AG04450 (cell line): ENCODE measurements at regions of chr2 and their contacts with region 1.

Region 1: GRCh38 chr2:232438951-232439757 is 16.8 kb upstream of the ALPI start:
- DNase-seq: no peak
- H3K4me3 ChIP-seq: no peak overlapping the region
- H3K27ac ChIP-seq: no peak overlapping the region
- H3K27me3 ChIP-seq: peaks cover 10% of the 10 kb centered on the region
- CTCF ChIP-seq: no peak; the same call in 1 of the 2 replicates

Region 2: GRCh38 chr2:231900486-231900942 is 538.6 kb before region 1 on chr2:
- CTCF ChIA-PET with region 1: interaction called, 36 read pairs
- POLR2A ChIA-PET with region 1: no interaction called
- DNase-seq: peak; percentile 11
- H3K4me3 ChIP-seq: no peak overlapping the region
- H3K27ac ChIP-seq: no peak overlapping the region
- H3K27me3 ChIP-seq: peaks cover 20% of the 10 kb centered on the region
- CTCF ChIP-seq: peak; percentile 92

Region 3: GRCh38 chr2:231907787-231908186 is 531.4 kb before region 1 on chr2:
- CTCF ChIA-PET with region 1: interaction called, 36 read pairs
- POLR2A ChIA-PET with region 1: no interaction called
- DNase-seq: no peak
- H3K4me3 ChIP-seq: no peak overlapping the region
- H3K27ac ChIP-seq: no peak overlapping the region
- H3K27me3 ChIP-seq: peaks cover 11% of the 10 kb centered on the region
- CTCF ChIP-seq: no peak

Region 4: DNA sequence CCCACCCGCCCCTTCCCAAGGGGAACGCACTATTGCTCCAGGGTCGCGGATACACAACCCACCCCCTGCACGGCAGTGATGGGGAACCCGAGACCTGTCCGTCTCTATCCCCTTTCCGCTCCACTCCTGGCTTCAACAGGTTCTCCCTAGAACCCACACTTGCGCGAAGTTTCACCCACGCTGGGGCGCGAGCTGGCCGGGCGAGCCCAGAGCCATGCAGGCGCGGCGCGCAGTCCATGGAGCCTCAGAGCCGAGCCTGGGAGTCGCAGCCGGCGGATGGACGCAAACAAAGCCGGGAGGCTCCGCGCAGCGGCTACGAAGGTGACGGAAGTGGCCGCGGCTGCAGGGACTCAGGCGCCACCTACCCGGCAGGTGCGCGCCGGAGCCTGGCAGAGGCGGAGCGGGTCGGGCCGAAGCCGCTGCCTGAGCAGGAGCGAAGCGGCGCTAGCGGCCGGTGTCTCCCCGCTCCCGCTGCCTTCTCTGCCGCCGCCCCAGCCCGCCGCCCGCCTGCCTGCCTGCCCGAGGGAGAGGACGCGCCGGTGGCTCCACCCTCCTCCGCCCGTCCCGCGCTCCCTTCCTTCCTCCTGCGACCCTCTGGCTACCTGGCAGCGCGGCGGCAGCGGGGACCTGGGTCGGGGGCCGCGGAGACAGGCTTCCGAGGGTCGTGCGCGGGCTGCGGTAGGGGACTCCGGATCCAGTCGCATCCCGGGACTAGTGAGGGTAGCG is 18.5 kb before region 1 on chr2:
- CTCF ChIA-PET with region 1: interaction called, 18 read pairs
- POLR2A ChIA-PET with region 1: no interaction called
- DNase-seq: no peak
- H3K4me3 ChIP-seq: no peak overlapping the region
- H3K27ac ChIP-seq: no peak overlapping the region
- H3K27me3 ChIP-seq: peaks cover 66% of the 10 kb centered on the region
- CTCF ChIP-seq: no peak